Activated T-helper 1 cell treated with anti-CD3 and anti-CD28 coated beads, Interleukin-12 subunit alpha, Interleukin-12 subunit beta, Interleukin-2, Interleukin-4 antibody, amounts not matched to agents 30 ng/mL and 10 ng/mL and 1 ng/mL, durations not matched to agents 14 hours and 24 hours and 36 hours (primary cell): ENCODE measurements at regions of chr1 and their contacts with region 1.

Region 1: GRCh38 chr1:151839457-151840405 is at the start of gene C2CD4D:
- DNase-seq: peak; percentile 73
- H3K4me3 Mint-ChIP-seq: peak within 1 kb of the TSS; percentile 90
- H3K27ac Mint-ChIP-seq: peak within 1 kb of the TSS; percentile 78
- H3K4me1 Mint-ChIP-seq: peaks cover 55% of the 10 kb centered on the region
- H3K27me3 Mint-ChIP-seq: peaks cover 6% of the 10 kb centered on the region
- total RNA-seq, gene C2CD4D: 1.0 and 1.2 TPM in 2 replicates

Region 2: GRCh38 chr1:151443846-151444782 is 395.6 kb before region 1 on chr1:
- intact Hi-C with region 1: loop called (anchors 1 kb)
- DNase-seq: peak; percentile 50
- H3K4me3 Mint-ChIP-seq: no peak overlapping the region
- H3K27ac Mint-ChIP-seq: no peak overlapping the region
- H3K4me1 Mint-ChIP-seq: peaks cover 36% of the 10 kb centered on the region
- H3K27me3 Mint-ChIP-seq: no peaks in the 10 kb centered on the region

Region 3: DNA sequence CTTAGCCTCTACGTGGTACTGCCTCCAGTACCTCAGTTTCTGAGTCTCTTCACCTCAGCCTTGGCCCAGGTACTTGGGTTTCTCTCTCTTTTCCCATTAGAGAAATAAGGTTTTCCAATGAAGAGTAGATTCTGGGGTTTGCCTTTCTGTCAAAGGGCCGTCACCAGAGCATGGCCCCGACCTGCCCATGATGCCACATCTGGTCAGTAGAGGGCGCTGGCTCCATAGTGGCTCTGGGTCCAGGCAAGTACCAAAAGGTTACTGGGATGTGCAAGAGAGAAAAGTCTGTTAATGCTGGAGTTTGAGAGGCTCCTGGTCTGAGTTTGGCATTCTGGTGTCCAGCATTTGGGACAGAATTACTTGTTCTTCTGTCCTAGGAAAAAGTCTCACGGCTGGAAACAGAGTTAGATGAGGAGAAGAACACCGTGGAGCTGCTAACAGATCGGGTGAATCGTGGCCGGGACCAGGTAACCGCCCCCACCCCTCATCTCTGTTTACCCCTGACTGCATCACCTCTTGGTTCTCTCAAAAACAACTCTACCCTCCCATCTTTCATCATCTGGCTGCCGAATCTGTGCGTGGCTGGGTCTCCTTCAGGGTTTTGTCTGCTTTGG is 305.0 kb before region 1 on chr1:
- intact Hi-C with region 1: loop called (anchors 1 kb)
- DNase-seq: peak; percentile 67
- H3K4me3 Mint-ChIP-seq: no peak overlapping the region
- H3K27ac Mint-ChIP-seq: no peak overlapping the region
- H3K4me1 Mint-ChIP-seq: no peaks in the 10 kb centered on the region
- H3K27me3 Mint-ChIP-seq: peaks cover 5% of the 10 kb centered on the region

Region 4: GRCh38 chr1:151594143-151594625 is 245.5 kb before region 1 on chr1:
- intact Hi-C with region 1: loop called (anchors 1 kb)
- DNase-seq: peak; percentile 75
- H3K4me3 Mint-ChIP-seq: peak overlapping the region; percentile 52
- H3K27ac Mint-ChIP-seq: no peak overlapping the region
- H3K4me1 Mint-ChIP-seq: peaks cover 12% of the 10 kb centered on the region
- H3K27me3 Mint-ChIP-seq: peaks cover 8% of the 10 kb centered on the region

Region 5: DNA sequence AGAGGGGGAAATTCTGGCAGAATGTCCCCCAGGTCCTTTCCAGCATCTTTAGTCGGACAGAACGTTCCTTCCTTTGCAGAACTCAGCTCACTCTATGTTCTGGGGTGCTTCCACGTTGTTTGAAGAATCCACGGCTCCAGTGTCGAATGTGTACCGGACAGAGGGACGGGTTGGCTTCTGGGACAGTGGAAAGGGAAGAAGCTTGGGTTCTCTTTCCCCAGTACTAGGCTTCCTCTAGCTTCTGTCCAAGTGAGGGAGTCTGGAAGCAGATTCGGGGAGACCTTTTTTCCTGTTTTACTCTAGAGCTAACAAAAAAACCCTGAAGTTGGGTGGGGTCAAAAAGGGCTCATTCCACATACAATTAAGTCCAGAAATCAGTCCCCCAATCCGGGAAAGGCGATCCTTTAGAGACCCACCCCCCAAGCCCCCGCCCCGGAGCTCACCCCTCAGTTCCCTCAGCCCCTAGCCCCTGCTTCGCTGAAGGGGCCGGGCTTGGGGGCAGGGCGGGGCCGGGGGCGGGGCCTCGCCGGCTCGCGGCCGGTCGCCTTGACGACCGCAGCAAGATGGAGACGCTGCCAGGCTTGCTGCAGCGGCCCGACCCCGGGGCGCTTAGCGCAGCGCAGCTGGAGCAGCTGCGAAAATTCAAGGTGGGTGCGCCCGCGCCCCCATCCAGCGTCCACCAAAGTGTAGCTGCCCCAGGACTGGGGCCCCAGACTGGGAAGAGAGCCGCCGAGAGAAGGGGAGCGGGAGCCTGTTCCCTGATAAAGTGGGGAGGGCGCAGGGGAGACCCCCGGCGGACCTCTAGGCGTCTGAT is 118.5 kb before region 1 on chr1 and contains the start of gene RIIAD1:
- intact Hi-C with region 1: loop called (anchors 5 kb)
- DNase-seq: peak; percentile 36
- H3K4me3 Mint-ChIP-seq: peak within 1 kb of the TSS; percentile 77
- H3K27ac Mint-ChIP-seq: no peak within 1 kb of the TSS
- H3K4me1 Mint-ChIP-seq: peaks cover 18% of the 10 kb centered on the region
- H3K27me3 Mint-ChIP-seq: peaks cover 76% of the 10 kb centered on the region
- total RNA-seq, gene RIIAD1: not detected in 2 replicates

Region 6: GRCh38 chr1:151762941-151763921 is 76.5 kb before region 1 on chr1 and contains the start of gene MRPL9:
- intact Hi-C with region 1: loop called (anchors 1 kb)
- DNase-seq: peak; percentile 84
- H3K4me3 Mint-ChIP-seq: peak within 1 kb of the TSS; percentile 89
- H3K27ac Mint-ChIP-seq: peak within 1 kb of the TSS; percentile 96
- H3K4me1 Mint-ChIP-seq: peaks cover 35% of the 10 kb centered on the region
- H3K27me3 Mint-ChIP-seq: no peaks in the 10 kb centered on the region
- total RNA-seq, gene MRPL9: 136 and 141 TPM in 2 replicates

Region 7: GRCh38 chr1:151858030-151858691 is 18.4 kb after region 1 on chr1:
- intact Hi-C with region 1: no loop called
- DNase-seq: no peak
- H3K4me3 Mint-ChIP-seq: no peak overlapping the region
- H3K27ac Mint-ChIP-seq: no peak overlapping the region
- H3K4me1 Mint-ChIP-seq: no peaks in the 10 kb centered on the region
- H3K27me3 Mint-ChIP-seq: peaks cover 3% of the 10 kb centered on the region

Region 8: DNA sequence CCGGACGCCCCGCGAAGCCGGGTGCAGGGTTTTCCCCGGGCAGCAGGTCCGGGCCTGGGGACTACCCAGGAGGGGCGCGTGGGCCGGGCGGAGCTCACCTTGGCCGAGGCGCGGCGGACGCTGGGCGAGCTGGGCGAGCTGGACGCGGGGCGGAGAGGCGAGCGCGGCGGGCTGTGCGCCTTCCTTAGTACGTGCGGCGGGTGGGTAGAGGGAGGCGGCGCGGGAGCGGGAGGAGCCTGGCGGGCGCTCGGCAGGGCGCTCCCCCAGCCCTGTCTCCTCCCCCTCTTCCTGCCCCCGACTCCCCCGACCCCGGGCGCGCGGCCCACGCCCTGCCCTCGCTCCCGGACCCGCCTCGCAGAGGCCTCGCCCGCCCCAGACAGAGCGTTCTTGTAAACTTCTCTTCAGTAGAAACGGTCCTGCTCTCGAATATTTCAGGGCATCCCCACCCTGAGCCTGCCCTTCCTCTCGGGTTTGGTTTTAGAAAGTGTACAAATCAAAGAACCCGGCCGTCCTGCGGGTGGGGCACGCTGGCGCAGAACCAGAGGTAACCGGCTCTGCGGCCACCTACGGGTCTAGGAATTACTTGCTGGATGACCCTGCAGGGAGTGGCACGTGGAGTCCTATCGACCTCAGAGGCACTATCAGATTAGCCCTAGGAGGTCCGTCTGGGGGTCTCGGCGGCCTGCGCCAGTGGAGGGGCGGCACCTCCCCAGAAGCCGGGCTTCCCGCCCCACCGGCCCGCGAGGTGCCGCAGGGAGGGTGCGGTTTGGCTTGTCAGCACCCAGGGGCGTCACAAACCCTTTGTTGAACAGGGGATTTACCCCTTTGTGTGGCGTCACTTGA is 154.1 kb after region 1 on chr1 and contains the start of gene S100A10:
- intact Hi-C with region 1: loop called (anchors 1 kb)
- DNase-seq: peak; percentile 77
- H3K4me3 Mint-ChIP-seq: peak within 1 kb of the TSS; percentile 98
- H3K27ac Mint-ChIP-seq: peak within 1 kb of the TSS; percentile 98
- H3K4me1 Mint-ChIP-seq: peaks cover 49% of the 10 kb centered on the region
- H3K27me3 Mint-ChIP-seq: peaks cover 1% of the 10 kb centered on the region
- total RNA-seq, gene S100A10: 105 and 106 TPM in 2 replicates